GM12878 (cell line): ENCODE measurements at regions of chr17 and their contacts with region 1.

Region 1: GRCh38 chr17:48441231-48441711 is 11.3 kb upstream of the SKAP1 start:
- DNase-seq: peak; percentile 96
- ATAC-seq: peak; percentile 86
- H3K4me3 ChIP-seq: peak overlapping the region; percentile 25; the same call in 1 of the 2 replicates
- H3K27ac ChIP-seq: peak overlapping the region; percentile 94
- H3K4me1 ChIP-seq: peaks cover 64% of the 10 kb centered on the region
- H3K27me3 ChIP-seq: no peaks in the 10 kb centered on the region
- CTCF ChIP-seq: no peak
- EP300 ChIP-seq: peak; percentile 85 to 91
- POLR2A ChIP-seq: no peak; the same call in 1 of the 2 replicates
- RAD21 ChIP-seq: 0 out of 2 replicates have a peak, but pooled peaks have one; percentile 1

Region 2: GRCh38 chr17:48307814-48308411 is 133.4 kb before region 1 on chr17:
- CTCF ChIA-PET with region 1: no interaction called
- POLR2A ChIA-PET with region 1: no interaction called
- RAD21 ChIA-PET with region 1: no interaction called
- SMC1A ChIA-PET with region 1: no interaction called
- in situ Hi-C with region 1: no loop called
- intact Hi-C with region 1: no loop called
- DNase-seq: no peak
- ATAC-seq: peak; percentile 98
- H3K4me3 ChIP-seq: no peak overlapping the region
- H3K27ac ChIP-seq: no peak overlapping the region
- H3K4me1 ChIP-seq: peaks cover 8% of the 10 kb centered on the region; the same call in 1 of the 2 replicates
- H3K27me3 ChIP-seq: no peaks in the 10 kb centered on the region
- CTCF ChIP-seq: peak; percentile 69 to 89 (median 86)
- EP300 ChIP-seq: no peak
- POLR2A ChIP-seq: no peak
- RAD21 ChIP-seq: peak; percentile 66

Region 3: DNA sequence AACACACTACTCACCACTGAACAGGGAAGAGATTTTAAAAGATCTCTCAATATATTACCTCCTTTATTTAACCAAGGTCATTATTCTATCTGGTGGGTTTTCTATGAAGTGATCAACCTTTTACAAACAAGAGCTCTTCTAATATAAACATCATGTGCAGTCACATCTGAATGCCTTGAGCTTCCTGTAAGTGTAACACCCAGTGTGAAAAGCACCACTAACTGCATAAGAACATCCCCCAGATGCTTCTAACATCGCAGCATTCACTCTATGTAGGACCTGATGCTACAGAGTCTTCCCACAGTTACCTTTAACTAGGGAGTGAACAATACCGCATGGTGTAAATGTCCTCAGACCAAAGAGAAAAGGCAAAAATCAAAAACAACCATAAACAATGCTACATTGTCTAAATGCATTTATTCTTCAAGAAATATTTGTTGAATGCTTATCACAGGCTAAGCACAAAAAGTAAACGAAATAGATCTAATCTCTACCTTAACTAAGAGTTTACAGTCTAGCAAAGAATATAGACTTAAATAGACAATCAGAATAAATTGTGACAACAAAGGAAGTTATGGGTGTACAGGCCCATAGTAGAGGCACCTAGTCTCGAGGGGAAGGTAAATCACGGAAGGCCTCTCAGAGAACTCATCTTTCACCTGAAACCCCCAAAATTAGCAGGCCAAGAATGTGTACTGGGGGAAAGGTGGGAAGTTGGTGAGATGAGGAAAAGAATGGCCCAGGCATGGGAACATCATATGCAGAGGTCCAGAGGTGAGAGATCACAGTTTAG is 27.5 kb before region 1 on chr17:
- CTCF ChIA-PET with region 1: interaction called, 5 read pairs
- POLR2A ChIA-PET with region 1: interaction called, 18 read pairs
- RAD21 ChIA-PET with region 1: interaction called, 45 read pairs
- SMC1A ChIA-PET with region 1: interaction called, 18 read pairs
- in situ Hi-C with region 1: no loop called
- intact Hi-C with region 1: no loop called
- DNase-seq: no peak
- ATAC-seq: peak; percentile 73
- H3K4me3 ChIP-seq: no peak overlapping the region
- H3K27ac ChIP-seq: peak overlapping the region; percentile 33; the same call in 1 of the 2 replicates
- H3K4me1 ChIP-seq: peaks cover 14% of the 10 kb centered on the region
- H3K27me3 ChIP-seq: no peaks in the 10 kb centered on the region
- CTCF ChIP-seq: no peak; a peak in 1 of 6 replicates
- EP300 ChIP-seq: no peak
- POLR2A ChIP-seq: no peak
- RAD21 ChIP-seq: no peak

Region 4: DNA sequence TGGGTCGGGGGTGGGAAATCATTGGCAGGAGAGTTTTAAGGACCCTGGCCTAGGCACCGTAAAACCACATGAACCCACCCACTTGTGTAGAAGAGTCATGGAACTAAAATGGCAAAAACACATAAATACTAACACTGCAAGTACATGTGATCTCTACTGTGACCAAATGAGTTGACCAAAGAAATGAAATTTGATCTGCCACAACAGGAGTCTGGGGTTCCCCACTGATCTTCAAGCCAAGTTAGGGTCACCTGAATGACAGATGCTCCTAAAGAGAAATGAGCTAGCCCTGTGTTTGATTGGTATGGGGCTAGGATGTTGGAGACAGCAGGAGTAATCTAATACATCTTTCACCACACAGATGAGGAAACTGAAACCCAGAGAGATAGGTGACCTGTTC is 10.2 kb after region 1 on chr17:
- CTCF ChIA-PET with region 1: interaction called, 28 read pairs
- POLR2A ChIA-PET with region 1: interaction called, 30 read pairs
- RAD21 ChIA-PET with region 1: interaction called, 47 read pairs
- SMC1A ChIA-PET with region 1: interaction called, 120 read pairs
- in situ Hi-C with region 1: no loop called
- intact Hi-C with region 1: no loop called
- DNase-seq: no peak
- ATAC-seq: peak; percentile 83
- H3K4me3 ChIP-seq: no peak overlapping the region
- H3K27ac ChIP-seq: no peak overlapping the region
- H3K4me1 ChIP-seq: peaks cover 14% of the 10 kb centered on the region
- H3K27me3 ChIP-seq: no peaks in the 10 kb centered on the region
- CTCF ChIP-seq: no peak
- EP300 ChIP-seq: no peak
- POLR2A ChIP-seq: no peak
- RAD21 ChIP-seq: no peak

Region 5: DNA sequence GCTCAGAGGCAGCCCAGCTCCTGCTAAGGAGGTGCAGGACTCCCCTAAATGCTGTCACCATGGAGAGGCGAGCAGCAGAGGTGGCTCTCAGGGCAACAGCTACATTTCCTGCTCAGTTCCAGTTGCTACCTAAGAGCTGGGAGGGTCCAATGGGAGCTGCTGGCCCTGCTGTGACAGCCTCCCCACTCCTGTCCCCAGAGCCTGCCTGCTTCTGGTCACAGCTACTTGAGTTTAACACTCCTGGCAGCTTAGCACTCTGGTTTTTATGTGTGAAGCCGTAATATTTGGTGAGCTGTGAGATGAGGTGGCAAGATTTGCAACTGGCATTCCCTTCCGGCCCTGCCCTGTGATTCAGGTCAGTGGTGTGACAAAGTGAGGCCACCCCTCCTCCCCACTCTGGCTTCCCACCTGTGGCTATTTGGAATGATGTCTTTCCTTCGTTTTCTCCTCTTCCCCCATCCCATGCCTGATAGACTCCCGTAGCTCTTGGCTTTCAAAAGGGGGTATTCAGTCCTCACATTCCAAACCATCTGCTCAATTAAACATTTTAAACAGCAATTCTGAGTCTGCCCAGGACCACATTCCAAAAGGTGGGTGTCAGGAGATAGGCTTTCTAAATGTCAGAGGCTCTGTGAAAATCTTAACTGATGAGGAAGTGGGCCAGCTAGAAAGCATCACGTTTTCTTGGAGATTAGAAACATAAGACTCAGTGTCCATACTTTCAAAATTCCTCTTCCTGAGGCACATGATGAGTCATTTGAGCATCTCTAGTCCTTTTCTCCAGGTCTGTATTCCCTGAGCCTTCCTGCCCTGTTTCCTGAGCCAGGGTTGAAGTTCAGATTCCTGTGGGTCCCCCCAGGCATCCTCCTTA is 31.4 kb after region 1 on chr17:
- CTCF ChIA-PET with region 1: interaction called, 14 read pairs
- POLR2A ChIA-PET with region 1: interaction called, 6 read pairs
- RAD21 ChIA-PET with region 1: interaction called, 8 read pairs
- SMC1A ChIA-PET with region 1: interaction called, 17 read pairs
- in situ Hi-C with region 1: no loop called
- intact Hi-C with region 1: no loop called
- DNase-seq: no peak
- ATAC-seq: peak; percentile 95
- H3K4me3 ChIP-seq: 0 out of 2 replicates have a peak overlapping the region, but pooled peaks have one; percentile 17
- H3K27ac ChIP-seq: no peak overlapping the region
- H3K4me1 ChIP-seq: peaks cover 16% of the 10 kb centered on the region
- H3K27me3 ChIP-seq: no peaks in the 10 kb centered on the region
- CTCF ChIP-seq: no peak
- EP300 ChIP-seq: peak; percentile 36 to 55; a peak in 1 of 4 replicates
- POLR2A ChIP-seq: no peak
- RAD21 ChIP-seq: no peak